ENCODE measurements at regions of chr1 and their contacts with region 1.

Region 1: GRCh38 chr1:3649342-3650247 is at the start of gene WRAP73:
- DNase-seq: peak; percentile 74 to 86
- H3K4me3 ChIP-seq: peak within 1 kb of the TSS; percentile 75 to 97 (median 86)
- H3K27ac ChIP-seq: no peak within 1 kb of the TSS
- H3K4me1 ChIP-seq: peaks cover 0 to 21% (median 3%) of the 10 kb centered on the region in 4 experiments; a peak in 5 of 7 replicates
- H3K27me3 ChIP-seq: peaks cover 42 to 48% (median 46%) of the 10 kb centered on the region in 4 experiments
- CTCF ChIP-seq: no peak
- EP300 ChIP-seq: no peak
- POLR2A ChIP-seq: no peak; a peak in 1 of 3 replicates
- RAD21 ChIP-seq: no peak
- total RNA-seq, gene WRAP73: 29.7 and 30.3 TPM in 2 replicates

Region 2: DNA sequence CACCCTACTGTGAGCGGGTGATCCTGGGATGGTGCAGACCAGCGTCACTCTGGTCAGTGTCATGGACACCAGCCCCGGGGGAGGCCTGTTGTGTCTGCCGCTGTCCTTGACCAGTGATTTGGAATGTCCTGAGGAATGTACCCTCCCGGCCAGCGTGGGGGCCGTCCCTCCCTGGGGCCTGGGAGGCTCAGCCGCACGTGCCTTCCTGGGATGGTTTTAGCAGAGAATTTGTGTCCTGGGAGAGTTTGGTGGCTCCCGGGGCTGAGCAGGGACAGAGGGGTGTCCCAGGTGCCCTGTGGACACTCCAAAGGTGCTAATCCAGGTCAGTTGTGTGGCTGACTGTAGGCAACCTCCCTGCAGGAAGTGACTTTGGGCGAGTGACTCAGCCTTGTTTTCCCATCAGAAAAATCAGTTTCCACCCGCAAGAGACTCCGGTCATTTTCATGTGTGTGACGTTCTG is 188.9 kb before region 1 on chr1:
- CTCF ChIA-PET with region 1: no interaction called
- POLR2A ChIA-PET with region 1: no interaction called
- DNase-seq: no peak
- H3K4me3 ChIP-seq: no peak overlapping the region
- H3K27ac ChIP-seq: no peak overlapping the region
- H3K4me1 ChIP-seq: peaks cover 0 to 5% (median 4%) of the 10 kb centered on the region in 4 experiments; a peak in 6 of 7 replicates
- H3K27me3 ChIP-seq: no peaks in the 10 kb centered on the region
- CTCF ChIP-seq: no peak
- EP300 ChIP-seq: no peak
- POLR2A ChIP-seq: no peak
- RAD21 ChIP-seq: no peak

Region 3: DNA sequence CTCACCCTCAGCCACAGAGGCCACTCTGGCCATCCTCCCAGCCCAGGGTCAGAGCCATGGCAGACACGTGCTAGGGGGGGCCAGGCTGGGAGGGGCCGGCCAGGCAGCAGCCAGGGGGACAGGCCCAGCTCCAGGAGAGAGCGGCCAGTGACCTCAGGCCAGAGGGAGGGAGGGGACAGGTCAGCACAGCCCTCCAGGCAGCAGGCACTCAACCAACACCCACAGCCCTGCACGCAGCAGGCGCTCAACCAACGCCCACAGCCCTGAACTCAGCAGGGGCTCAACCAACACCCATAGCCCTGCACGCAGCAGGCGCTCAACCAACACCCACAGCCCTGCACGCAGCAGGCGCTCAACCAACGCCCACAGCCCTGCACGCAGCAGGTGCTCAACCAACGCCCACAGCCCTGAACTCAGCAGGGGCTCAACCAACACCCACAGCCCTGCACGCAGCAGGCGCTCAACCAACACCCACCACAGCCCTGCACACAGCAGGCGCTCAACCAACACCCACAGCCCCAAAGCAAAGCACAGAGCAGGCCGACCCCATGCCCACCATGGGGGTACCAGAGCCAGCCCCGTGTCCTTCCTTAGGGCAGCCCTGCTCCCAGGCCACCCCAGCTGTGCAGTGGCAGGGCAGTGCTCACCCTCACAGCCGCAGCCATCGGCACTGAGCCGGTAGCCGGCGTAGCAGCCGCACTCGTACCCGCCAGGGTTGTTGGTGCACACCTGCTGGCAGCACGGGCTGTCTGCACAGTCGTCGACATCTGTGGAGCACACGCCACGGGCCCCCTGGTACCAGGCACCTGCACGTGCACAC is 139.2 kb before region 1 on chr1:
- CTCF ChIA-PET with region 1: no interaction called
- POLR2A ChIA-PET with region 1: no interaction called
- DNase-seq: no peak
- H3K4me3 ChIP-seq: no peak overlapping the region
- H3K27ac ChIP-seq: no peak overlapping the region
- H3K4me1 ChIP-seq: no peaks in the 10 kb centered on the region
- H3K27me3 ChIP-seq: no peaks in the 10 kb centered on the region
- CTCF ChIP-seq: no peak
- EP300 ChIP-seq: no peak
- POLR2A ChIP-seq: no peak
- RAD21 ChIP-seq: no peak

Region 4: DNA sequence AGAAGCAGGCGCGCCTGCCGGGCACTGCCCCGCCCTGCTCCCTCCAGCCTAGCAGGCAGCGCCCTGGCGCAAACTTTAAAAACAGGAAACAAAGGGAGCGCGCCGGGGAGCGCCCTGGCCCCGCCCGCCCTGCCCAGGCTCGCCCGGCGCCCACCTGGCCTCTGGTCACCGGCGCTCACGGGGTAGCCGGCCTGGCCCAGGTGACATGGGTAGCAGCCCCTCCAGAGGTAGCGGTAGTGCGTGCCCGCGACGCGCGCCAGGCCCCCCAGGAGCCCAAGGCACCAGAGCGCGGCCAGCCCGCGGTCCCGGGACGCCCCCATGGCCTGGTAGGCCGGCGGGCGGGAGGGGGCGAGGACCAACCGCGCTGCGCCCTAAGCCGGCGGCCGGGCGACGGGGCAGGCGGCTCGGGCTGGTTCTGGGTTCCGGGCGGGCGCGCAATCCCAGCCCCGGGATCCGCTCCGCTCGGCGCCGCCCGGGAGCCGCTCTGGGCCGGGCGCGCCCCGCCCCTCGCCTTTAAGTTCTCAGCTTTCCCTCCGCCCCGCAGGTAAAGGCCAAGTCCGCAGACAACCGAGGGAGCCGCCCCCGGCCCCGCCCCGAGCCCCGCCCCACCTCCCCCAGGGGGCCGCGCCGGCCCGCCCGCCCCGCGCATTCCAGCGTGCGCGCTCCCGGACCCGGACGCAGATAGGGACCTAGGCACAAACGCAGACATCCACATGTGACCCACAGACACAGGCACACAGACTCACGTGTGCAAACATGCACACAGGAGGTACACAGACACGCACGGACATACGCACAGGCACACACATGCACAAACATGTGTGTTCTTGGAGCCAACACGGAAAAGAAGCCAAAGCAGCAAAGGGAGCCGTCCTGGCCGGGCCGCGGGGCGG is 118.4 kb before region 1 on chr1:
- CTCF ChIA-PET with region 1: no interaction called
- POLR2A ChIA-PET with region 1: no interaction called
- DNase-seq: peak; percentile 34 to 83
- H3K4me3 ChIP-seq: peak overlapping the region; percentile 45 to 78 (median 62)
- H3K27ac ChIP-seq: no peak overlapping the region; the same call in 1 of the 2 replicates
- H3K4me1 ChIP-seq: peaks cover 0 to 13% (median 8%) of the 10 kb centered on the region in 4 experiments; a peak in 6 of 7 replicates
- H3K27me3 ChIP-seq: peaks cover 0 to 33% (median 29%) of the 10 kb centered on the region in 4 experiments; a peak in 6 of 7 replicates
- CTCF ChIP-seq: no peak
- EP300 ChIP-seq: no peak
- POLR2A ChIP-seq: peak in 1 of 2 experiments; percentile 59; a peak in 2 of 3 replicates
- RAD21 ChIP-seq: no peak

Region 5: GRCh38 chr1:3631330-3632262 is 18.0 kb before region 1 on chr1:
- CTCF ChIA-PET with region 1: interaction called, 11 read pairs
- POLR2A ChIA-PET with region 1: interaction called, 4 read pairs
- DNase-seq: no peak
- H3K4me3 ChIP-seq: no peak overlapping the region
- H3K27ac ChIP-seq: no peak overlapping the region; the same call in 1 of the 2 replicates
- H3K4me1 ChIP-seq: peaks cover 0 to 10% (median 2%) of the 10 kb centered on the region in 4 experiments; a peak in 3 of 7 replicates
- H3K27me3 ChIP-seq: no peaks in the 10 kb centered on the region
- CTCF ChIP-seq: no peak
- EP300 ChIP-seq: no peak
- POLR2A ChIP-seq: no peak
- RAD21 ChIP-seq: no peak

Region 6: DNA sequence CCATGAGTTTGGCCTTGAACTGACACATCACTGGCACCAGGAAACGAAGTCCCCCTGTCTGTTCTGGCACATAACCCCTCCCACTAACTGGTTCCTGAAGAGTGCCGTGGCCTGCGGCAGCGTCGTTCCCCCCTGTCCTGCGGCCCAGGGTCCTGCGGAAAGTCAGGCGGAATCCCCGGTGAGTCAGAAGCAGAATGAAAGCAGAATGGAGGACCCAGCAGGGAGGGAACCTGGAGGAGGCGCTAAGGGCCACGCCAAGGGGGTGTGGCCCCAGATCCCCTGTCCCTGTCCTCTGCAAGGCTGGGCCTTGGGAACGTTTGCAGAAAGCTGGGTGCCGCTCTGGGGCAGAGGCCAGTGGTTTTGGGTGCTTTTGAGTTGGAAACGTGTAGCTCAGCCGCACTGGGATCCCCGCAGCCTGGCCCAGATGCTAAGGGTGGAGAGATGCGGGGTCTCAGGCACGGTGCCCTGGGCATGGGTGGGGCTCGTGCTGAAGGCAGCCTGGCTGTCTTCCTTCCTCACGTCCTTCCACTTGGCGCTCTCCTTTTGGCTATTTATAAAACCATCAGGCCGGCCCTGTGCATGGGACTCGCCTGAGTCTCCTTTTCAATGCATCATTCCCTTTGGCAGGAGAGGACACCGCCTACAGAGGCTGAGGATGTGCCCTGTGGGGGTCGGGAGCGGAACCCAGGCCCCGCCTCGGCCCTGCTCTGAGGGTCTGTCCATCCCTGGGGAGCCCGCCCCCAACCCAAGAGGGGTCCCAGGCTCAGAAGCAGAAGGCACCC is 39.0 kb after region 1 on chr1:
- CTCF ChIA-PET with region 1: no interaction called
- POLR2A ChIA-PET with region 1: no interaction called
- DNase-seq: peak in 1 of 2 experiments; percentile 66
- H3K4me3 ChIP-seq: no peak overlapping the region; a peak in 1 of 8 replicates
- H3K27ac ChIP-seq: no peak overlapping the region
- H3K4me1 ChIP-seq: peaks cover 3 to 31% (median 17%) of the 10 kb centered on the region in 4 experiments
- H3K27me3 ChIP-seq: peaks cover 0 to 12% (median 3%) of the 10 kb centered on the region in 4 experiments; a peak in 3 of 7 replicates
- CTCF ChIP-seq: no peak
- EP300 ChIP-seq: no peak
- POLR2A ChIP-seq: no peak
- RAD21 ChIP-seq: no peak

Measured in H1 (cell line).